RWPE1 (cell line): ENCODE measurements at regions of chr10 and their contacts with region 1.

Region 1: GRCh38 chr10:102450194-102450938 is 977 bp downstream of the C10orf95 start:
- DNase-seq: peak; percentile 76
- H3K27ac ChIP-seq: peak overlapping the region; percentile 88
- CTCF ChIP-seq: no peak

Region 2: GRCh38 chr10:102432162-102432950 is 18.0 kb before region 1 on chr10 and contains the start of gene CUEDC2:
- CTCF ChIA-PET with region 1: interaction called, 5 read pairs
- POLR2A ChIA-PET with region 1: interaction called, 12 read pairs
- DNase-seq: peak; percentile 95
- H3K27ac ChIP-seq: peak within 1 kb of the TSS; percentile 84
- CTCF ChIP-seq: no peak